ENCODE measurements at regions of chr1 and their contacts with region 1.

Region 1: DNA sequence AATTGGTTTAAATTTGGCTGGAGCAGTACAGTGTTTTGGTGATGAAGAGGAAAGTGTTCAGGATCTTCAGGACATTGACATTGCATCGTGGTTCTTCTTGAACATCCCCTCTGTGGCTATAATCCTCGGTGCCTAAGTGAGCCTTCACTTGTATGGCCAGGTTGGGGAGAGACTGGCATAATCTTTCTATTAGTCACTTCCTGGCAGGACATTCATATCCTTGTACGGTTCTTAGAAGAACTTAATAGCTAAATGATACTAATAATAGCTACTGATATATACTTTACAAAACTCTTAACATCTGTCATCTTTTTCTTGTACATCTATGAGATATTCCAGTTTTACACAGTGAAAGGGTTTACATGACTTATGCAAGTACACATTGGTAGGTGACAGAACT is 35.8 kb downstream of the CELF3 start:
- DNase-seq: peak; percentile 54
- H3K4me3 Mint-ChIP-seq: peak overlapping the region; percentile 5
- H3K27ac Mint-ChIP-seq: peak overlapping the region; percentile 62
- H3K4me1 Mint-ChIP-seq: peaks cover 30% of the 10 kb centered on the region
- H3K27me3 Mint-ChIP-seq: no peaks in the 10 kb centered on the region
- CTCF ChIP-seq: no peak

Region 2: DNA sequence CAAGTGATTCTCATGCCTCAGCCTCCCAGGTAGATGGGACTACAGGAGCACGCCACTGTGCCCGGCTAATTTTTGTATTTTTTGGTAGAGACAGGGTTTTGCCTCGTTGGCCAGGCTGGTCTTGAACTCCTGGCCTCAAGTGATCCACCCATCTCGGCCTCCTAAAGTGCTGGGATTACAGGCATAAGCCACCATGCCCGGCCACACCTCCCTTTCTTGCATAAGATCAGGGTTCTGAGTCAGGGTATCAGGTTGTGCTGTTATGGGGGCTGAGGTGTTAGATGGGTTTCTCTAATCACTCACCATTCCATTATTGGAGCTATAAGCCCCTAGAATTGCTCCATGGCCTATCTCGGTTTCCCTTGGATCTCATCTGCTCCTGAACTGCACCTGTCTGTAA is 626.9 kb before region 1 on chr1:
- CTCF ChIA-PET with region 1: interaction called, 10 read pairs
- intact Hi-C with region 1: no loop called
- DNase-seq: no peak
- H3K4me3 Mint-ChIP-seq: no peak overlapping the region
- H3K27ac Mint-ChIP-seq: no peak overlapping the region
- H3K4me1 Mint-ChIP-seq: peaks cover 41% of the 10 kb centered on the region
- H3K27me3 Mint-ChIP-seq: no peaks in the 10 kb centered on the region
- CTCF ChIP-seq: no peak

Region 3: GRCh38 chr1:151311589-151312331 is 369.1 kb before region 1 on chr1:
- CTCF ChIA-PET with region 1: no interaction called
- intact Hi-C with region 1: no loop called
- DNase-seq: peak; percentile 93
- H3K4me3 Mint-ChIP-seq: no peak overlapping the region
- H3K27ac Mint-ChIP-seq: peak overlapping the region; percentile 95
- H3K4me1 Mint-ChIP-seq: peaks cover 34% of the 10 kb centered on the region
- H3K27me3 Mint-ChIP-seq: no peaks in the 10 kb centered on the region
- CTCF ChIP-seq: no peak

Region 4: DNA sequence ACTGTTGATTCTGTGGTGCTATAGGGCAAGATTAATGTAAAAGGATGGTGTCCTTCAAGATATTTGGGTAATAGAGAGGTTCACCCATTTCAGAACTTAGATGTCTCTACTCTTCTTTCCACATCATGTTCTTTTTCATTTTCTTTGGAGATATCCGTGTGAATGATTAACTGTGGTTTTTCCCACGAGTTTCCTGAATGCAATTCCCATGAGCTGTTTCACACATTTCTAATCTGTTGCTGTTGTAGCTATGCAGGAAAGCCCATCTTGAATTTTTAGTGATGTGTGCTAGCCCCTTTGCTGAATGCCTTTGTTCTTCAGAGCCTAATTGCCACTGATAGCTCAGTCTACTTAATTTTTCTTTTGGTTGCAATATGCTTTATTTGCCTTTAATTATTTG is 41.3 kb before region 1 on chr1:
- CTCF ChIA-PET with region 1: no interaction called
- intact Hi-C with region 1: loop called (anchors 2 kb)
- DNase-seq: peak; percentile 15
- H3K4me3 Mint-ChIP-seq: peak overlapping the region; percentile 66
- H3K27ac Mint-ChIP-seq: peak overlapping the region; percentile 90
- H3K4me1 Mint-ChIP-seq: peaks cover 37% of the 10 kb centered on the region
- H3K27me3 Mint-ChIP-seq: no peaks in the 10 kb centered on the region
- CTCF ChIP-seq: no peak

Region 5: GRCh38 chr1:151839457-151840405 is 158.9 kb after region 1 on chr1 and contains the start of gene C2CD4D:
- CTCF ChIA-PET with region 1: no interaction called
- intact Hi-C with region 1: no loop called
- DNase-seq: peak; percentile 96
- H3K4me3 Mint-ChIP-seq: peak within 1 kb of the TSS; percentile 91
- H3K27ac Mint-ChIP-seq: peak within 1 kb of the TSS; percentile 98
- H3K4me1 Mint-ChIP-seq: peaks cover 51% of the 10 kb centered on the region
- H3K27me3 Mint-ChIP-seq: no peaks in the 10 kb centered on the region
- CTCF ChIP-seq: no peak
- total RNA-seq, gene C2CD4D: 1.7 and 2.5 TPM in 2 replicates

Region 6: GRCh38 chr1:151934048-151934493 is 253.3 kb after region 1 on chr1:
- CTCF ChIA-PET with region 1: no interaction called
- intact Hi-C with region 1: no loop called
- DNase-seq: peak; percentile 76
- H3K4me3 Mint-ChIP-seq: no peak overlapping the region
- H3K27ac Mint-ChIP-seq: no peak overlapping the region
- H3K4me1 Mint-ChIP-seq: peaks cover 28% of the 10 kb centered on the region
- H3K27me3 Mint-ChIP-seq: no peaks in the 10 kb centered on the region
- CTCF ChIP-seq: peak; percentile 79

Region 7: GRCh38 chr1:152047730-152048402 is 367.1 kb after region 1 on chr1:
- CTCF ChIA-PET with region 1: no interaction called
- intact Hi-C with region 1: no loop called
- DNase-seq: peak; percentile 96
- H3K4me3 Mint-ChIP-seq: peak overlapping the region; percentile 48
- H3K27ac Mint-ChIP-seq: peak overlapping the region; percentile 84
- H3K4me1 Mint-ChIP-seq: peaks cover 41% of the 10 kb centered on the region
- H3K27me3 Mint-ChIP-seq: peaks cover 4% of the 10 kb centered on the region
- CTCF ChIP-seq: no peak